ENCODE measurements at regions of chr14 and their contacts with region 1.

Region 1: GRCh38 chr14:58297762-58298476 is 436 bp upstream of the ARID4A start:
- DNase-seq: peak; percentile 100
- H3K4me3 Mint-ChIP-seq: no peak overlapping the region
- H3K27ac Mint-ChIP-seq: no peak overlapping the region
- H3K4me1 Mint-ChIP-seq: no peaks in the 10 kb centered on the region
- H3K27me3 Mint-ChIP-seq: no peaks in the 10 kb centered on the region
- CTCF ChIP-seq: peak; percentile 11

Region 2: GRCh38 chr14:57960946-57961785 is 336.8 kb before region 1 on chr14:
- CTCF ChIA-PET with region 1: no interaction called
- POLR2A ChIA-PET with region 1: no interaction called
- intact Hi-C with region 1: no loop called
- DNase-seq: no peak
- H3K4me3 Mint-ChIP-seq: no peak overlapping the region
- H3K27ac Mint-ChIP-seq: no peak overlapping the region
- H3K4me1 Mint-ChIP-seq: peaks cover 6% of the 10 kb centered on the region
- H3K27me3 Mint-ChIP-seq: peaks cover 10% of the 10 kb centered on the region
- CTCF ChIP-seq: no peak

Region 3: GRCh38 chr14:58199726-58200479 is 98.0 kb before region 1 on chr14 and contains the start of gene ACTR10:
- CTCF ChIA-PET with region 1: no interaction called
- POLR2A ChIA-PET with region 1: interaction called, 19 read pairs
- intact Hi-C with region 1: no loop called
- DNase-seq: peak; percentile 88
- H3K4me3 Mint-ChIP-seq: peak within 1 kb of the TSS; percentile 98
- H3K27ac Mint-ChIP-seq: peak within 1 kb of the TSS; percentile 85
- H3K4me1 Mint-ChIP-seq: peaks cover 16% of the 10 kb centered on the region
- H3K27me3 Mint-ChIP-seq: peaks cover 20% of the 10 kb centered on the region
- CTCF ChIP-seq: no peak
- total RNA-seq, gene ACTR10: 55.1 and 78.8 TPM in 2 replicates

Region 4: GRCh38 chr14:58244556-58245387 is 53.1 kb before region 1 on chr14 and contains the start of gene PSMA3:
- CTCF ChIA-PET with region 1: no interaction called
- POLR2A ChIA-PET with region 1: interaction called, 134 read pairs
- intact Hi-C with region 1: loop called (anchors 2 kb)
- DNase-seq: peak; percentile 98
- H3K4me3 Mint-ChIP-seq: peak within 1 kb of the TSS; percentile 96
- H3K27ac Mint-ChIP-seq: peak within 1 kb of the TSS; percentile 99
- H3K4me1 Mint-ChIP-seq: peaks cover 20% of the 10 kb centered on the region
- H3K27me3 Mint-ChIP-seq: no peaks in the 10 kb centered on the region
- CTCF ChIP-seq: no peak
- total RNA-seq, gene PSMA3: 203 and 239 TPM in 2 replicates

Region 5: DNA sequence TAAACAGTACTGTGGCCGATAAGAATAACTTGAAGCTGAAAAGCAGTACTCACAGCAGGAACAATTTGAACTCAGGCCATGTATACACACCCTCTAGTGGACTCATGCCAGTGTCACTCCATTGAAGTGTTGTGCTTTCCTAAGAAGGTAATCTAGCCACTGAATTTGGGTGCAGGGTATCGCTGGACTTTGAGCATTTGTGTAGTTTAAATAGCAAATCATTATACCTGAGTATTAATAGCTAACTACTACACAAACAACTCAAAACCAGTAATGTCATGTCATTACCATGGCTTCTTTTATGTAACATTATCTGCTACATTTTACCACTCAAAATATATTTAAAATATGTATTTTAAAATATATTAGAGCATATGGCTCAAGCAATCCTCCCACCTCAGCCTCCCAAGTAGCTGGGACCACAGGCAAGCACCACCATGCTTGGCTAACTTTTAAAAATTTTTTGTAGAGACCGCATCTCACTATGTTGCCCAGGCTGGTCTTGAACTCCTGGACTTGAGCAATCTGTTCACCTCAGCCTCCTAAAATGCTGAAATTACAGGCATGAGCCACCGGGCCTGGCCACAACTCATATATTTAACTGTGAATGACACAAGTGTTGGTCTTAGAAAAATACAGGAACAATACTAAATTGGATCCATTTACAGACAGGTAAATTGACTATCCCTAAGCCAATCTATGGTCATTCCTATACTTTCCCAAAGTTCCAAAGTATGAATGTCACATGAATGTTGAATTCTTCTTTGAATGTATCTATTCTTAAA is 25.1 kb before region 1 on chr14:
- CTCF ChIA-PET with region 1: interaction called, 3 read pairs
- POLR2A ChIA-PET with region 1: interaction called, 43 read pairs
- intact Hi-C with region 1: no loop called
- DNase-seq: peak; percentile 34
- H3K4me3 Mint-ChIP-seq: no peak overlapping the region
- H3K27ac Mint-ChIP-seq: no peak overlapping the region
- H3K4me1 Mint-ChIP-seq: peaks cover 16% of the 10 kb centered on the region
- H3K27me3 Mint-ChIP-seq: no peaks in the 10 kb centered on the region
- CTCF ChIP-seq: no peak

Region 6: GRCh38 chr14:58287607-58288042 is 10.3 kb before region 1 on chr14:
- CTCF ChIA-PET with region 1: no interaction called
- POLR2A ChIA-PET with region 1: interaction called, 88 read pairs
- intact Hi-C with region 1: no loop called
- DNase-seq: no peak
- H3K4me3 Mint-ChIP-seq: no peak overlapping the region
- H3K27ac Mint-ChIP-seq: peak overlapping the region; percentile 8
- H3K4me1 Mint-ChIP-seq: peaks cover 38% of the 10 kb centered on the region
- H3K27me3 Mint-ChIP-seq: no peaks in the 10 kb centered on the region
- CTCF ChIP-seq: no peak

Region 7: DNA sequence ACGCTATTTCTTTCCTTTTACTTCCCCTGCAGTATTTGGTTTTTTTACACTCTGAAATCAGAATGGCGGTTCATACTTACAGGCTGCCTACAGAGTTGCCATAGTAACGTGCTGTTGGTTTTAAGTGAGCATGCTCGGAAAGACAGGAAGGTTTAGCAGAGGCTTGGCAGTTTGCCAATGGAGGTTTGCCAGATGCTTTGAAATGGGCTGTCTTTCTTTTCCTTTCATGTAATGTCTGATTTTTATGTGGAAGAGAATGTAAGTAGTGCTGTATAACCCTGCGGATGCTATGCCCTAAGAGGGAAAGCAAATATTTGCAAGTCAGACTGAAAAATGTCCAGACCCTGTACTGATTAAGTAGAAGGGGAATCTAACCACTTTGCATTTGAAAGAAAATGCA is 33.2 kb after region 1 on chr14:
- CTCF ChIA-PET with region 1: no interaction called
- POLR2A ChIA-PET with region 1: interaction called, 12 read pairs
- intact Hi-C with region 1: no loop called
- DNase-seq: peak; percentile 95
- H3K4me3 Mint-ChIP-seq: no peak overlapping the region
- H3K27ac Mint-ChIP-seq: peak overlapping the region; percentile 81
- H3K4me1 Mint-ChIP-seq: peaks cover 10% of the 10 kb centered on the region
- H3K27me3 Mint-ChIP-seq: no peaks in the 10 kb centered on the region
- CTCF ChIP-seq: no peak

Region 8: DNA sequence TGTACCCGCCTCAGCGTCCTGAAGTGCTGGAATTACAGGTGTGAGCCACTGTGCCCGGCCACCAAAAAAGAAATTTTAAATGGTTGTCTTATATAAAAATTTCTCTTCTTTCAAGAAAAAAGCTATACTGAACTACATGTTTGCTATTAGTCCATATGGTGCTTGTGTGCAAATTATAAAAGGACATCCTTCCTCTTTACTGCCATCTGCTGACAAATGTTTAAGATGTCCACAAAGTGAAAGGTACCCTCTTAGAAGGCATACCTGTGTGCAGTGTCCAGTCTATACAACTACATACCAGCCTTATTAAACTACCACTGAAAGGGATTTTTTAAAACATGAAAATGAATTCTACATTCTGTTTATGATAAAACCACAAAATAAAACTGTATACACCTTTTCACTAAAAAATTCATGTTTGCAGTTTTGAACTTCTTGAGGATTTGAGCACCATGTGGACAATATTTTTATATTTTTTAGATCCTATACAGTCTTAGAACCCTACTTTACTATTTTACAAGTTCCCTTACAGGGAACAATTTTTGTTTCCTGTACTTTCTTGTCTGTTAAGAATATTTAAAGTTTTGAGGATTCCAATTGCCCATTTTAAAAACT is 65.0 kb after region 1 on chr14:
- CTCF ChIA-PET with region 1: interaction called, 4 read pairs
- POLR2A ChIA-PET with region 1: interaction called, 3 read pairs
- intact Hi-C with region 1: loop called (anchors 5 kb)
- DNase-seq: peak; percentile 49
- H3K4me3 Mint-ChIP-seq: no peak overlapping the region
- H3K27ac Mint-ChIP-seq: no peak overlapping the region
- H3K4me1 Mint-ChIP-seq: no peaks in the 10 kb centered on the region
- H3K27me3 Mint-ChIP-seq: no peaks in the 10 kb centered on the region
- CTCF ChIP-seq: peak; percentile 20